HEK293 (cell line): ENCODE measurements at regions of chr11 and their contacts with region 1.

Region 1: DNA sequence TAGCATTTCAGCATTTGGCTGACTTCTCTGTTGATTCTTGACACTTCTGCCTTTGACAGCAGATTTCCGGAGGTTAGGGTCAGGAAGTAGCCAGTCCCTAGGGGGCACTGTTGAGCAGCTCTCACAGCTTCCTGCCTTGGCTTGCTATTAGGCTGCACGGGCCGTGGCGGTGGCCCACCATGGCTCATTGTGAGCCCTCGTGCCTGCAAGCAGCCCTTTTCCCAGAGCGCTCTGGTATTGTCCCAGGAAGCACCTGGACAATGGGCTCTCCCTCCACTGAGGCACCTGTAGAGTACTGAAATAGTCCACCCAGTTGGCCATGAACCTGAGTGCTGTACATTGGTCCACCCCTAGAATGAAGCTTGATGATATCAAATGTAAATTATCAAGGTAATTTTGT is 100.2 kb upstream of the GAL start:
- H3K4me3 ChIP-seq: no peak overlapping the region
- H3K27ac ChIP-seq: no peak overlapping the region
- H3K4me1 ChIP-seq: no peaks in the 10 kb centered on the region
- CTCF ChIP-seq: peak; percentile 38; the same call in 1 of the 2 replicates

Region 2: GRCh38 chr11:68513930-68514487 is 70.1 kb before region 1 on chr11:
- CTCF ChIA-PET with region 1: no interaction called
- POLR2A ChIA-PET with region 1: no interaction called
- H3K4me3 ChIP-seq: no peak overlapping the region
- H3K27ac ChIP-seq: no peak overlapping the region
- H3K4me1 ChIP-seq: no peaks in the 10 kb centered on the region
- CTCF ChIP-seq: no peak

Region 3: DNA sequence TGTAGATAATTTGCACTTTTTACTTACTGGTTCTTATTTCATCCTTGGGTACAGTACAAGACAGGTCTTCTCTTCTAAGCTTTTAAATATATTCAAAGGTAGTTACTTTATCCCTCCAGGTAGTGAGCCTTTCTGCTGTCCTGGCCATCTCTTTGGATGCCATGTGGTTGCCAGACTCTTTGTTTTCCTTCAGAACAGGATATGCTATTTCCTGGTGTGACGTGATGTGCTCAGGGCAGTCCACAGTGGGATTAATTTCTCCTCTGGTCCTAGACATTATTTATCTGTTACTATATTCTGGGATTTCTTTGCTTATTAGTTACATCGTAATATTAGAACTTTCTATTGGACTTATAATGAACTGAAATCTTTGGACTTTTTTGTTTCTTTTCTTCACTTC is 59.9 kb before region 1 on chr11:
- CTCF ChIA-PET with region 1: interaction called, 12 read pairs
- POLR2A ChIA-PET with region 1: no interaction called
- H3K4me3 ChIP-seq: no peak overlapping the region
- H3K27ac ChIP-seq: no peak overlapping the region
- H3K4me1 ChIP-seq: no peaks in the 10 kb centered on the region
- CTCF ChIP-seq: no peak

Region 4: DNA sequence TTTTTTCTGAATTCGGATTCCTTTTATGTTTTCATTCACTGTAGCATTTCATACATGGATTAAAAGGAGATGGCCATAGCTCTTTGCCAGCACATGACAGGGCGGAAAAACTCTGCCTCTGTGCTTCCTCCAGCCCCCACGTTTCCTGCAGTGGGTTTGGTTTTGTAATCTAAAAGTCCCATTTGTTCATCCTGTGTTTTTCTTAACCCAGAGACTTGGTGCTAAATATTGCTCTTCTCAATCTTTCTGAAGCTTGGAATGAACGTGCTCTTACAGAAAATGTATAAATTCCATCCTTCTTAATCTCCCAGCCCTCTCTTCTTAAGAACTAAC is 33.6 kb before region 1 on chr11:
- CTCF ChIA-PET with region 1: interaction called, 15 read pairs
- POLR2A ChIA-PET with region 1: no interaction called
- H3K4me3 ChIP-seq: no peak overlapping the region
- H3K27ac ChIP-seq: no peak overlapping the region
- H3K4me1 ChIP-seq: no peaks in the 10 kb centered on the region
- CTCF ChIP-seq: no peak

Region 5: DNA sequence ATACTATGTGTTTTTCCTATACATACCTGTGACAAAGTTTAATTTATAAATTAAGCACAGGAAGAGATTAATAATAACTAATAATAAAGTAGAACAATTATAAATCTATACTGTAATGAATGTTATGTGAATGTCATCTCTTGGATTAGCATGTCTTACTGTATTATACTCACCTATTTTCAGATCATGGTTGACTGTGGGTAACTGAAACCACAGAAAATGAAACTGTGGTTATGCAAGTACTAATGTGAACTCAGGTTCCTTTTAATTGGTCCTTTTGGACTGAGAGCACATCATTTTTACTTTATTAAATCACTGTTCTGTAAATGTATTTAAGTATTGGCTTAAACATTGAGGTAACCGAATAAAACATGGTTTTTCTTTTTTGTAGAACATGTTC is 14.7 kb before region 1 on chr11:
- CTCF ChIA-PET with region 1: interaction called, 39 read pairs
- POLR2A ChIA-PET with region 1: no interaction called
- H3K4me3 ChIP-seq: no peak overlapping the region
- H3K27ac ChIP-seq: no peak overlapping the region
- H3K4me1 ChIP-seq: no peaks in the 10 kb centered on the region
- CTCF ChIP-seq: no peak